WTC11 (cell line): ENCODE measurements at regions of chr19 and their contacts with region 1.

Region 1: DNA sequence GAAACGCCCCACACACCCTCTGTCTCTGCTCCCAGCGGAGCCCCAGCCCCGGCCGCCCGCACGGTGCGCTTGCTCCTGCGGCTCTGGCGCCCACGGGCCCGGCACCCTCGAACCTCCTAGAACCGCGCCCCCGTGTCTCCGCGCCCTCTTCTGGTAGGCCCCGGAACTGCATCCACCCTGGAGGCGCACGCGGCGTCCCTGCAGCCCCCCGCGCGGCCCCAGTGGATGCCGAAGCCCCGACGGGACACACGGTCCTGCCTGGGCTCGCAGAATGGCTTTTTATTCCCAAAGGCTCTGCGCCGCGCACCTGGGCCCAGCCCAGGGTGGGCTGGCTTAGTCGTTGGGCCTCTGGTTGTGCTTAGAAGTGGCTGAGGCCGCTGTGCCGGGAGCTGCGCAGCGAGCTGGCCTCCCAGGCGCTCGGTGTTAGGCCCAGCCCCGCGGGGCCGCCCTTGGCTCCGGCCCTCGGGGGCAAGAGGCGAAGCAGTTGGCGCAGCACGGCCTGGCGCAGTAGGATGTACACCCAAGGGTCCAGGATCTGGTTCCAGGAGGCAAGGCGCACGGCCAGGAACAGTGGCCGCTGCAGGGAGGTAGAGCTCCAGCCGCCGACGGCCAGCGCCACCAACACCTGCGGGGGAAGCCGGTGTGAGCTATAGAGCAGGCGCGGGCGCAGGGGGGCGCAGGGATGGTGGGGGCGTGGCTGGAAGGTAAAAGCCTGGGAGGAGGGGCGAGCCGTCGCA is 2.8 kb downstream of the PTGER1 start:
- DNase-seq: peak; percentile 91
- ATAC-seq: peak; percentile 56
- H3K4me3 Mint-ChIP-seq: peak overlapping the region; percentile 56
- H3K27ac Mint-ChIP-seq: no peak overlapping the region
- H3K4me1 Mint-ChIP-seq: peaks cover 24% of the 10 kb centered on the region
- H3K27me3 Mint-ChIP-seq: peaks cover 12% of the 10 kb centered on the region
- CTCF ChIP-seq: peak; percentile 100

Region 2: DNA sequence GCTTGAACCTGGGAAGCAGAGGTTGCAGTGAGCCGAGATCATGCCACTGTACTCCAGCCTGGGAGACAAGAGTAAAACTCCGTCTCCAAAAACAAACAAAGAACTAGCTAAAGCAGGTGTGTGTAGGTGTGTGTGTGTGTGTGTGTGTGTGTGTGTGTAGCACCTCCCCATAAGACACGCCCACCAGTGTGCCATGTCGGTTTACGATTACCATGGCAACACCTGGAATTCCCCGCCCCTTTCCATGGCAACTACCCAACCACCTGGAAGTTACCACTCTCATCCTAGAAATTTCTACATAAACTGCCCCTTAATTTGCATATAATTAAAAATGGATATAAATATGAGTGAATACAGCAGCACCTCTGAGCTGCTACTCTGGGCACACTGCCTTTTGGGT is 172.1 kb before region 1 on chr19:
- CTCF ChIA-PET with region 1: no interaction called
- POLR2A ChIA-PET with region 1: no interaction called
- DNase-seq: peak; percentile 59
- ATAC-seq: peak; percentile 58
- H3K4me3 Mint-ChIP-seq: no peak overlapping the region
- H3K27ac Mint-ChIP-seq: no peak overlapping the region
- H3K4me1 Mint-ChIP-seq: peaks cover 23% of the 10 kb centered on the region
- H3K27me3 Mint-ChIP-seq: no peaks in the 10 kb centered on the region; the same call in 1 of the 2 replicates
- CTCF ChIP-seq: no peak

Region 3: DNA sequence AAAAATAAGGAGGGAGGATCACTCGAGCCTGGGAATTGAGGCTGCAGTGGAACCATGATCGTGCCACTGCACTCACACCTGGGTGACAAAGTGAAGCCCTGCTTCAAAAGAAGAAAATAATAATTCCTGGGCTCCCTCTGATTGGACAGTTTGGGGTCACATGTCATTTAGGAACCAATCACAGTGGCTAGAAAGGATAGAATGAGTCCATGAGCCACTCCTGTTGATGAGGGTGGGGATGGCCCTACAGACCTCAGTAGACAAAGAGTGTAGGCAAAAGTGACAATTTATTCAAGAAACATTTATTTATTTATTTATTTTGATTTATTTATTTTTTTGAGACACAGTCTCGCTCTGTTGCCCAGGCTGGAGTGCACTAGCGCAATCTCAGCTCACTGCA is 117.9 kb before region 1 on chr19:
- CTCF ChIA-PET with region 1: no interaction called
- POLR2A ChIA-PET with region 1: no interaction called
- DNase-seq: no peak
- ATAC-seq: no peak
- H3K4me3 Mint-ChIP-seq: no peak overlapping the region
- H3K27ac Mint-ChIP-seq: no peak overlapping the region
- H3K4me1 Mint-ChIP-seq: peaks cover 6% of the 10 kb centered on the region
- H3K27me3 Mint-ChIP-seq: peaks cover 1% of the 10 kb centered on the region; the same call in 1 of the 2 replicates
- CTCF ChIP-seq: no peak

Region 4: DNA sequence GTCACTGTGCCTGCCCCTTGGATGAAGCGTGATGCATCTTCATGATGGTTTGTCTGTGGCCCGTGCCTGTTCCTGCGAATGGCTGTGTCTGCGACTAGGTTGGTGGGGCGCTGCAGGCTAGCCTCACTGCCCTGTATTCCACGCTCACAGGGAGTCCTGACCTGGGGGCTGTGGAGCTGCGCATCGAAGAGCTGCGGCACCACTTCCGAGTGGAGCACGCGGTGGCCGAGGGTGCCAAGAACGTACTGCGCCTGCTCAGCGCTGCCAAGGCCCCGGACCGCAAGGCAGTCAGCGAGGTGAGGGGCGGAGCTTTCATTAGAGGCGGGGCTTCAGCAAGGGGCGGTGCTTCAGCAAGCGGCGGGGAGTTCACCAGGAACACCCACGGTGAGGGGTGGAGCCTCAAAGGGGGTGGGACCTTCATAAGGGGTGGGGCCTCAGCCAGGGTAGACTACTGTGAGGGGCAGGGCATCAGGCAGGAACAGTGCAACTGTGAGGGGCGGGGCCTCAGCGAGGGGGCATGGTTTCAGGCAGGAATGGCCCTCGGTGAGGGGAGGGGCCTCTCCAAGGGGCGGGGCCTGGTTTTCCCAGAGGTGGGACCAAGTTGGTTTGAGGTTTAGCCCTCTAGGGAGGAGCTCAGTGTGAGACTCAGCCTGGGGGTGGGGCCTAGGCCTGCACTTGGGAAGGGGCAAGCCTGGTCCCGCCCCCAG is 22.0 kb before region 1 on chr19:
- CTCF ChIA-PET with region 1: interaction called, 33 read pairs
- POLR2A ChIA-PET with region 1: interaction called, 4 read pairs
- DNase-seq: peak; percentile 100
- ATAC-seq: peak; percentile 99
- H3K4me3 Mint-ChIP-seq: no peak overlapping the region
- H3K27ac Mint-ChIP-seq: peak overlapping the region; percentile 89
- H3K4me1 Mint-ChIP-seq: no peaks in the 10 kb centered on the region
- H3K27me3 Mint-ChIP-seq: no peaks in the 10 kb centered on the region
- CTCF ChIP-seq: no peak

Region 5: GRCh38 chr19:14487370-14488125 is 15.2 kb after region 1 on chr19:
- CTCF ChIA-PET with region 1: interaction called, 25 read pairs
- POLR2A ChIA-PET with region 1: interaction called, 3 read pairs
- DNase-seq: no peak
- ATAC-seq: no peak
- H3K4me3 Mint-ChIP-seq: no peak overlapping the region
- H3K27ac Mint-ChIP-seq: no peak overlapping the region
- H3K4me1 Mint-ChIP-seq: 0 out of 2 replicates have a peak, but pooled peaks cover 2% of the 10 kb centered on the region
- H3K27me3 Mint-ChIP-seq: no peaks in the 10 kb centered on the region
- CTCF ChIP-seq: no peak

Region 6: GRCh38 chr19:14661372-14661924 is 189.1 kb after region 1 on chr19:
- CTCF ChIA-PET with region 1: no interaction called
- POLR2A ChIA-PET with region 1: no interaction called
- DNase-seq: no peak
- ATAC-seq: no peak
- H3K4me3 Mint-ChIP-seq: no peak overlapping the region
- H3K27ac Mint-ChIP-seq: peak overlapping the region; percentile 34; the same call in 1 of the 2 replicates
- H3K4me1 Mint-ChIP-seq: no peaks in the 10 kb centered on the region
- H3K27me3 Mint-ChIP-seq: 0 out of 2 replicates have a peak, but pooled peaks cover 1% of the 10 kb centered on the region
- CTCF ChIP-seq: no peak